ENCODE measurements at regions of chr9 and their contacts with region 1.

Region 1: GRCh38 chr9:134163353-134164196 is 789 bp downstream of the RNU6ATAC start:
- DNase-seq: peak; percentile 77
- ATAC-seq: peak; percentile 8
- H3K4me3 Mint-ChIP-seq: no peak overlapping the region
- H3K27ac Mint-ChIP-seq: no peak overlapping the region
- H3K4me1 Mint-ChIP-seq: peaks cover 16% of the 10 kb centered on the region
- H3K27me3 Mint-ChIP-seq: no peaks in the 10 kb centered on the region
- CTCF ChIP-seq: peak; percentile 65

Region 2: DNA sequence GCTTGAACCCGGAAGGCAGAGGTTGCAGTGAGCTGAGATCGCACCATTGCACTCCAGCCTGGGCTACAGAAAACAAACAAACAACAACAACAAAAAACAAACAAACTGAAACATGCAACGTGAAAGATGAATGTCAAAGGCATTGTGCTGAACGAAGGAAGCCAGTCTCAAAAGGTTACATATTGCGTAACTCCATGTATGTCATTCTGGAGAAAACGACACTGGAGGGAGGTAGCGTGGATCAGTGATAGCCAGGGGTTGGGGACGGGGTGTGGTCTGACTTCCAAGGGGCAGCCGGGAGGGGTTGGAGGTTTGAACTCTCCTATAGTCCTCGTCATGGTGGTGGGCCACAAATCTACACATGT is 39.8 kb before region 1 on chr9:
- CTCF ChIA-PET with region 1: no interaction called
- POLR2A ChIA-PET with region 1: no interaction called
- intact Hi-C with region 1: no loop called
- DNase-seq: no peak
- ATAC-seq: no peak
- H3K4me3 Mint-ChIP-seq: no peak overlapping the region
- H3K27ac Mint-ChIP-seq: no peak overlapping the region
- H3K4me1 Mint-ChIP-seq: peaks cover 3% of the 10 kb centered on the region
- H3K27me3 Mint-ChIP-seq: no peaks in the 10 kb centered on the region
- CTCF ChIP-seq: no peak

Region 3: DNA sequence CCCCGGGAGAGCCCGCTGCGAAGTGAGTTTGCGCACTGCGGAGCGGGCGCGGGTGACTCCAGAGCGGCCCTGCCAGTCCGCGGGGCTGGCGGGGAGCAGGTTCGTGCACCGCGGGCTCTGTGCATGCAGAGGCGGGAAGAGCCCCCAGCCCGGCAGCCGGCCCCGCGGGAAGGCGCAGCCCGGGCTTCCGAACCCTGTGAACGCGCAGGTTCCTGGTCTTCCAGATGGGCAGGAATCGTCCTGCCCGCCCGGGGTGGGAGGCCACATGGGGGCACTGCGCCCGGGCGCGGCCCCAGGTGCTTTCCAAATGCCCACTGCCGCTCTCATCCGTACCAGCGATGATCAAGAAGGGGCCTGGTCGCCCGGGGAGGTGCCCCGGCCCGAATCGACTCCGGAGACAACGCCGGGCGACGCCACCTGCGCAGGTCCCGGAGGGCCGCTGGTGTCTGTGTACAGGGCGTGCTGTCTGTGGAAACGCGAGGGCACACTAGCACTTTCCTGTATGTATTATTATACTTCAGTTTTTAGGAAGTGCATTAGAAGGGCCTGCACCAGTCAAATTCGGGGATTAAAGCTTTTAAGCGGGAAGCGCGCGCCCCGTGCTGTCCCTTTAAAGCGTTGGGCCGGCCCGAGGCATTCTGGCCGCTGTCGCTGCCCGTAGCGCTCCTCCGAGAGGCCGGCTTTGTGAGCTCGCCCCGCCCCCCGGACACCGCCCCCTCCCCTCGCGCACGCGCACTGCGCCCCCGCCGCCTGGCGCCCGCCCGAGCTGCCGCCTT is 28.0 kb before region 1 on chr9 and contains the start of gene WDR5:
- CTCF ChIA-PET with region 1: interaction called, 12 read pairs
- POLR2A ChIA-PET with region 1: interaction called, 32 read pairs
- intact Hi-C with region 1: no loop called
- DNase-seq: peak; percentile 91
- ATAC-seq: peak; percentile 87
- H3K4me3 Mint-ChIP-seq: peak within 1 kb of the TSS; percentile 88
- H3K27ac Mint-ChIP-seq: peak within 1 kb of the TSS; percentile 91
- H3K4me1 Mint-ChIP-seq: peaks cover 28% of the 10 kb centered on the region
- H3K27me3 Mint-ChIP-seq: no peaks in the 10 kb centered on the region
- CTCF ChIP-seq: no peak
- total RNA-seq, gene WDR5: 50.9 to 53.3 TPM

Region 4: GRCh38 chr9:134146774-134147500 is 16.6 kb before region 1 on chr9:
- CTCF ChIA-PET with region 1: interaction called, 7 read pairs
- POLR2A ChIA-PET with region 1: interaction called, 10 read pairs
- intact Hi-C with region 1: no loop called
- DNase-seq: no peak
- ATAC-seq: no peak
- H3K4me3 Mint-ChIP-seq: no peak overlapping the region
- H3K27ac Mint-ChIP-seq: no peak overlapping the region
- H3K4me1 Mint-ChIP-seq: no peaks in the 10 kb centered on the region
- H3K27me3 Mint-ChIP-seq: no peaks in the 10 kb centered on the region
- CTCF ChIP-seq: no peak

Measured in activated CD8-positive, alpha-beta T cell treated with anti-CD3 and anti-CD28 coated beads for 36 hours (primary cell).